ENCODE measurements at regions of chr12 and their contacts with region 1.

Region 1: GRCh38 chr12:71780237-71780822 is 25.7 kb downstream of the RAB21 start:
- DNase-seq: no peak
- H3K4me3 ChIP-seq: no peak overlapping the region
- H3K27ac ChIP-seq: no peak overlapping the region
- H3K27me3 ChIP-seq: no peaks in the 10 kb centered on the region
- CTCF ChIP-seq: peak; percentile 78

Region 2: DNA sequence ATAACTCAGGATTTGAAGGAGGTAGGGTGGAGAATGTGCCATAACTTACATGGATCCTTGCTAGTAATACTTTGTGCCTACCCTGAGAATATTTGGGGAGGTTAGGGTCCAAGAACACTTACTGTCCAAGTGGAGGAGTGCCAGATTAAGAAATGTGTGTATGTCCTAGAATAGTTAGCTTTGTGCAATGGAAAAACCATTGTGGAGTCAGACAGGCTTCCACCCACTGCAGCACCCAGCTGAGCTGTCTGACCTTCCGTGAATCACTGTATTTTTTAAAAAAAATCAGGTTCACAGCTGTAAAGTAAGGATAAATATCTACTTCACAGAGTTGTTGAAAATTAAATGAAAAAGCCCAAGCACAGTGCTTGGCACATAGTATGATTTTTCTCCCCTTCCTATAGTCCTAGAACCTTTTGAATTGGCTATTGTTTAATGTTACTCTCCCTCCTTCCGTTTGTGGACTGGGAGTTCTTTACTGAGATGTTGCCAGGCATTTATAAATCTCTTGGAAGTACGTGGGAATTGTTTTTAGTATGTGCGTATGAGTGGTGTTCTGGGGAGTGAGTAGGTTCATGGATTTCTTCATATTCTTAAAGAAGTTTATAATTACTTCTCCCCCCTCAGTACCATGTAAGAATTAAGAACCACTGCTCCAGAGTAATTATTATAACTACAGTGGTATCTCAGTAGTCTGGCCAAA is 16.5 kb before region 1 on chr12:
- CTCF ChIA-PET with region 1: interaction called, 33 read pairs
- POLR2A ChIA-PET with region 1: no interaction called
- DNase-seq: no peak
- H3K4me3 ChIP-seq: no peak overlapping the region
- H3K27ac ChIP-seq: no peak overlapping the region
- H3K27me3 ChIP-seq: no peaks in the 10 kb centered on the region
- CTCF ChIP-seq: no peak

Region 3: DNA sequence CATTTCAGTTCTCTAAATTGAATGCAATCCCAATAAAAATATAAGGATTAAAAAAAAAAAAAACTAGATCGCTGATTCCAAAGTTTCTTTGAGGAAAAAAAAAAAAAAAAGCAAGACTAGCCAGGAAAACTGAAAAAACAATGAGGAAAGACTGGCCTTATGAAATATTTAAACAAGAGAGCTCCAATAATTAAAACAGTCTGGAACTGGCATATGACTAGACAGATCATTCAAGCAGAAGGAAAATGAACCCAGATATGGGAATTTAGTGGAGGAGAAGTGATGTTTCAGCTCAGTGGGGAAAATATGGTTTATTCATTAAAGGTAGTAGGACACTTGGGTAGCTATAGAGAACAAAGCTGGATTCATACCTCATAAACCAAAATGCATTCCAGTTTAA is 17.2 kb after region 1 on chr12:
- CTCF ChIA-PET with region 1: interaction called, 82 read pairs
- POLR2A ChIA-PET with region 1: no interaction called
- DNase-seq: no peak
- H3K4me3 ChIP-seq: no peak overlapping the region
- H3K27ac ChIP-seq: no peak overlapping the region
- H3K27me3 ChIP-seq: no peaks in the 10 kb centered on the region
- CTCF ChIP-seq: no peak

Region 4: DNA sequence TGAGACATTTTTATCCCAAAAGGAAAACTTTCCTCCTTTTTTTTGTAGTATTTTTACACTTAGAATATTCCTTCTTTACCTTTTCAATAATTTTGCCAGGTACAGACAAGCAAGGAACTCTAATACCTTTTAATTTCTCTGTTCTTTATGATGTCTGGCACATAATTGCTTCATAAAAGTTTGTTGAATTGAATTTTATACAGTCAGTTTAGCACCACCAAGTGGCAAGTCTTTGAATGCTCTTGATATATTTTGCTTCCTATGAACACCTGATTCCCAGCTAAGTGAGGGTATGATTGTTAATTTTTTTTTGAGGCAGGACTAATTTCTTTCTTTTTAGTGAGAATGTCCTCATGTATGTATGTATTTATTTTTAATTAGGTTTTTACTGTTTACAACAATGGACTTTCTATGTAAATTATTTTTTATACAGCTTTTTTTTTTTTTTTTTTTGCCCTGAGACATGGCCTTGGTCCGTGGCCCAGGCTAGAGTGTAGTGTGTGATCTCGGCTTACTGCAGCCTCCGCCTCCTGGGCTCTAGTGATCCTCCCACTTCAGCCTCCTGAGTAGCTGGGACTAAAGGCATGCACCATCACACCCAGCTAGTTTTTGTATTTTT is 66.1 kb after region 1 on chr12:
- CTCF ChIA-PET with region 1: interaction called, 77 read pairs
- POLR2A ChIA-PET with region 1: no interaction called
- DNase-seq: no peak
- H3K4me3 ChIP-seq: no peak overlapping the region
- H3K27ac ChIP-seq: no peak overlapping the region
- H3K27me3 ChIP-seq: no peaks in the 10 kb centered on the region
- CTCF ChIP-seq: peak; percentile 63

Region 5: GRCh38 chr12:71938728-71939385 is 158.5 kb after region 1 on chr12 and contains the start of gene TPH2:
- CTCF ChIA-PET with region 1: interaction called, 22 read pairs
- POLR2A ChIA-PET with region 1: no interaction called
- DNase-seq: no peak
- H3K4me3 ChIP-seq: no peak within 1 kb of the TSS
- H3K27ac ChIP-seq: no peak within 1 kb of the TSS
- H3K27me3 ChIP-seq: no peaks in the 10 kb centered on the region
- CTCF ChIP-seq: peak; percentile 83
- polyA plus RNA-seq, gene TPH2: 0.04 TPM in 1 of 2 replicates, not detected in the other